Tibial artery (tissue), 4 donors: ENCODE measurements at regions of chr7 and their contacts with region 1.

Region 1: GRCh38 chr7:158782761-158783401 is 46.4 kb downstream of the ESYT2 start:
- DNase-seq: peak; percentile 80 to 95
- H3K4me3 ChIP-seq: peak overlapping the region; percentile 8 to 37
- H3K27ac ChIP-seq: peak overlapping the region; percentile 75 to 80
- H3K4me1 ChIP-seq: peaks cover 0 to 73% (median 35%) of the 10 kb centered on the region in 4 donors
- H3K27me3 ChIP-seq: no peaks in the 10 kb centered on the region
- CTCF ChIP-seq: peak; percentile 71 to 79

Region 2: GRCh38 chr7:158829342-158830210 is 46.7 kb after region 1 on chr7 and contains the start of gene ESYT2:
- intact Hi-C with region 1: loop called (anchors 5 kb)
- DNase-seq: peak; percentile 97 to 99
- H3K4me3 ChIP-seq: peak within 1 kb of the TSS; percentile 82 to 86
- H3K27ac ChIP-seq: peak within 1 kb of the TSS; percentile 95 to 100
- H3K4me1 ChIP-seq: peaks cover 0 to 36% (median 16%) of the 10 kb centered on the region in 4 donors
- H3K27me3 ChIP-seq: no peaks in the 10 kb centered on the region
- CTCF ChIP-seq: peak; percentile 23 to 25

Region 3: DNA sequence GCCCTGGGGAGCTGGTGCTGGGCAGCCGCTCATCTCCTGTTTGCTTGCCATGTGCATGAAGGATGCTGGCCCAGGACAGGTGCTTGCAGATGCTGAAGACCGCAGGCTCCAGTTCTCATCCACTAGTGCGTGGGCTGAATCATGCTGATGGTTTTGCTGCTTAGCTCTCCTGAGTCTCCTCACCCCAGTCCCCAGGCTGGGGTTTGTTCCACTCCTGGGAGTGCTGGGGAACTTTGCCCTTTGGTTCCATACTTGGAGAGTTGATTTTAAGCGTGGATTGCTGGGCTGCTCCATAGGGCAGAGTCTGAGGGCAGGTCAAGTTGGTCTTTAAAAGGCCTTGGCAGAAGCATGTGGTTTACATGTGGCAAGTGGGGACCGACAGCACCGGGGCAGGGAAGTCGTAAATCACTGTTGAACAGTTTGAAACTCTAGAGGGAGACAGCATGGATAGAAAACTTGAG is 82.6 kb after region 1 on chr7:
- intact Hi-C with region 1: no loop called
- DNase-seq: peak in 1 of 2 donors; percentile 71
- H3K4me3 ChIP-seq: no peak overlapping the region
- H3K27ac ChIP-seq: peak overlapping the region; percentile 91 to 93
- H3K4me1 ChIP-seq: peaks cover 0 to 33% (median 17%) of the 10 kb centered on the region in 4 donors
- H3K27me3 ChIP-seq: no peaks in the 10 kb centered on the region
- CTCF ChIP-seq: no peak

Region 4: DNA sequence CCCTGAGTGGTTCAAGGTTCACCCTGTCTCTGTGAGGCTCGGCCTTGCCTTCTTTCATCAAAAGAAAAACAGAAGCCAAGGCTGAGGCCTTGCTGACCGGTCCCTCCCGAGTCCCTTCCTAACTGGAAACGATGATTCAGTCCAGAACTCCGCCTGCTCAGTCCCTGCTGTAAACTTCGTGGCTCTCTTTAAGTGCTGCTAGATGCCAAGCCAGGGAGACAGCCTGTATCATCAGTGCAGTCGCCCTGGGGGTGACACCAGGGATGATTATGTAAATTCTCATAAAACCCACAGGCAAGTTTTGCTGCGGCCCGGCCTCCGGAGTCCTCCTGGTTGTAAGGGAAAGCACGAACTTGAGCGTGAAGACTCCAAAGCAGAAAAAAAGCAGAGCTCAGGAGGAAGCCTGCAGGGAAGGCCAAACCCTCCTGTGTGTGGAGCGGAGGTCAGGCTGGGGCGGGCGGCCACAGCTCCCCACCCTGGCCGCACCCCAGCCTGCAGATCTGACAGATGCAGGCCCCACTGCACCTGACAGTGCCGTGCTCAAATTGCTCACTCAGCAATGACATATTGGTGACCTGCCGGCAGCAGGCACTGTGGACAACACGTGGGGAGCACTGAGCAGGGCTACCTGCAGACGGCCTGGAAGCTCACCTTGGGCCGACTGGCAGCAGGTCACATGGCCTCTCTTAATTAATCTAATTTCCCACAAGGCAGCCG is 196.9 kb after region 1 on chr7:
- intact Hi-C with region 1: loop called (anchors 10 kb)
- DNase-seq: no peak
- H3K4me3 ChIP-seq: no peak overlapping the region
- H3K27ac ChIP-seq: peak overlapping the region; percentile 21 to 32
- H3K4me1 ChIP-seq: peaks cover 0 to 18% (median 8%) of the 10 kb centered on the region in 4 donors
- H3K27me3 ChIP-seq: no peaks in the 10 kb centered on the region
- CTCF ChIP-seq: no peak